ENCODE measurements at regions of chr9 and their contacts with region 1.

Region 1: DNA sequence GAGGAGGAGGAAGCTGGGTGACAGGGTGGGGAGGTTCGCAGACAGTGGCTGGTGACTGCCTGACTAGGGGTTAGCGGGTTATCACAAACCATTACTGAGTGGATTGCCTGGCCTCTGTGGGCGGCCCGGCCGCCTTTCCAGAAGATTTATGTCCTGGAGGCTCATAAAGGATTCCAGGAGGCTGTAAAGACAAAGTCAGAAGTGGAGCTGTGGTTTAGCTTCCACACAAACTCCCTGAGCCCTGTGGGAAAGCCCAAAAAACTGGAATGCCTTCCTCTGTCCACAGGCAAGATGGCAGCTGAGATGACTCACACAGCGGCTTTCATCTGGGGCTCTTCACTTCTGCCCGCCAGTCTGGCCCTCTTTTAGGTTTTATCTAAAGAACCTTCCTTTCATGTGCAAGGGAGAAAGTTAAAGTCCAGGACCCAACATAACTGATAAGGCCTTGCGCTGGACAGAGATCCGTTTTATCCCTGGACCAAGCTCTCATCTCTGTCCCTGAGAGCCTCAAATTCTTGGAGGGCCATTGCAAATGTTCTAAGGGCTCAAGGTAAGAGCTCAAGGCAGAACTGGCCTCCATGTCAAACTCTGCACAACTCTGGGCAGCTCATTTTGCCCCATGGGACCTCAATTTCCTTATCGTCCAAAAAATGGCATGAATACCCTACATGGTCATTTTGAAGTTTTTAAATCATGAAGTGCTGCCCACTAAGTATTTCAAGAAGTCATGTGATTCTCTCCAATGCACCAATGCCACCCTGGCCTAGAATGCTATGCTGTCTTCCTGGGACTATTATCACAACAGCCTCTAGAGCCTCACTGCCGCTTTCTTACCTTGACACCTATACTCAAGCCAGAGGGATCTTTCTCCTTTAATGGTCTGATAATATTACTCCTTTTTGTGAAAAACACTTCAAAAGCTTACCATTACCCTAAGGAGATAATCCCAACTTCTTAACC is 249.4 kb upstream of the TRIM32 start:
- DNase-seq: peak; percentile 47 to 84 (median 65)
- ATAC-seq: peak; percentile 93
- H3K4me3 ChIP-seq: no peak overlapping the region
- H3K27ac ChIP-seq: peak overlapping the region; percentile 80
- H3K4me1 ChIP-seq: peaks cover 8 to 19% of the 10 kb centered on the region in 2 experiments; a peak in 4 of 5 replicates
- H3K27me3 ChIP-seq: no peaks in the 10 kb centered on the region
- CTCF ChIP-seq: no peak
- EP300 ChIP-seq: peak; percentile 76
- POLR2A ChIP-seq: no peak
- RAD21 ChIP-seq: peak; percentile 7 to 16; a peak in 2 of 4 replicates

Region 2: GRCh38 chr9:116355153-116355921 is 82.4 kb before region 1 on chr9:
- CTCF ChIA-PET with region 1: no interaction called
- POLR2A ChIA-PET with region 1: interaction called, 3 read pairs
- in situ Hi-C with region 1: no loop called
- intact Hi-C with region 1: loop called (anchors 5 kb)
- DNase-seq: peak in 1 of 4 experiments; percentile 18
- ATAC-seq: peak; percentile 61
- H3K4me3 ChIP-seq: no peak overlapping the region
- H3K27ac ChIP-seq: no peak overlapping the region
- H3K4me1 ChIP-seq: peaks cover 6 to 20% of the 10 kb centered on the region in 2 experiments; a peak in 4 of 5 replicates
- H3K27me3 ChIP-seq: no peaks in the 10 kb centered on the region
- CTCF ChIP-seq: no peak
- EP300 ChIP-seq: no peak
- POLR2A ChIP-seq: no peak
- RAD21 ChIP-seq: no peak

Region 3: GRCh38 chr9:116390306-116391228 is 47.1 kb before region 1 on chr9:
- CTCF ChIA-PET with region 1: no interaction called
- POLR2A ChIA-PET with region 1: no interaction called
- in situ Hi-C with region 1: no loop called
- intact Hi-C with region 1: loop called (anchors 5 kb)
- DNase-seq: no peak
- ATAC-seq: no peak
- H3K4me3 ChIP-seq: no peak overlapping the region
- H3K27ac ChIP-seq: no peak overlapping the region
- H3K4me1 ChIP-seq: peaks cover 5 to 30% of the 10 kb centered on the region in 2 experiments; a peak in 4 of 5 replicates
- H3K27me3 ChIP-seq: no peaks in the 10 kb centered on the region
- CTCF ChIP-seq: no peak
- EP300 ChIP-seq: no peak
- POLR2A ChIP-seq: no peak
- RAD21 ChIP-seq: no peak

Region 4: DNA sequence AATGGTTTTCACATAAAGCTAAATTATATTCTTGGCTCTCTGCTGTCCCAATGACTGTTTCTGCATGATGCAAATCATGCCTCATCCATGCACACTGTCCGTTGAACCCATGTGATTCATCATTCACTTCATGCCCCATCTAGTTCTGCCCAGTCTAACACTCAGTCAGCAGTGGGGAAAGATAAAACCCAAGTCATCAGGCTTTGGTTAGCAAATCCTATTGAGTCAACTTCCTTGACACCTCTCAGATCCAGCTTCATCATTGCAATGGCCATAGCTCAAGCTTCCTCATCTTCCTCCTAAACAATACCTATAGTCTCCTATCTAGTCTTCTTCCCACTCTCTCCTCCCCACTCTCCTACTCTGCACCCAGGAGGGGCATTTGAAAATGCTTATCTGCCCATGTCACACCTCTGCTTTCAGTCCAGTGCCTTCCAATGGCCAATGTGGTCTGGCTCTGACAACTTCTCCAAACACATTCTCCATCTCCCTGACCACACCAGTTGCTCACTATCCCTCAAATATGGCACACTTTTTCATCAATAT is 16.6 kb before region 1 on chr9:
- CTCF ChIA-PET with region 1: interaction called, 4 read pairs
- POLR2A ChIA-PET with region 1: interaction called, 19 read pairs
- in situ Hi-C with region 1: no loop called
- intact Hi-C with region 1: loop called (anchors 2 kb)
- DNase-seq: peak in 2 of 4 experiments; percentile 40 to 67
- ATAC-seq: peak; percentile 11
- H3K4me3 ChIP-seq: no peak overlapping the region
- H3K27ac ChIP-seq: peak overlapping the region; percentile 16; the same call in 1 of the 3 replicates
- H3K4me1 ChIP-seq: peaks cover 13 to 63% of the 10 kb centered on the region in 2 experiments
- H3K27me3 ChIP-seq: no peaks in the 10 kb centered on the region
- CTCF ChIP-seq: no peak
- EP300 ChIP-seq: no peak
- POLR2A ChIP-seq: no peak
- RAD21 ChIP-seq: no peak

Region 5: GRCh38 chr9:116464987-116465571 is 27.4 kb after region 1 on chr9:
- CTCF ChIA-PET with region 1: no interaction called
- POLR2A ChIA-PET with region 1: interaction called, 3 read pairs
- in situ Hi-C with region 1: no loop called
- intact Hi-C with region 1: loop called (anchors 1 kb)
- DNase-seq: peak; percentile 65 to 97 (median 80)
- ATAC-seq: peak; percentile 79
- H3K4me3 ChIP-seq: no peak overlapping the region
- H3K27ac ChIP-seq: peak overlapping the region; percentile 95
- H3K4me1 ChIP-seq: peaks cover 23 to 79% of the 10 kb centered on the region in 2 experiments
- H3K27me3 ChIP-seq: no peaks in the 10 kb centered on the region
- CTCF ChIP-seq: no peak
- EP300 ChIP-seq: peak; percentile 100
- POLR2A ChIP-seq: no peak
- RAD21 ChIP-seq: peak; percentile 37 to 46

Region 6: DNA sequence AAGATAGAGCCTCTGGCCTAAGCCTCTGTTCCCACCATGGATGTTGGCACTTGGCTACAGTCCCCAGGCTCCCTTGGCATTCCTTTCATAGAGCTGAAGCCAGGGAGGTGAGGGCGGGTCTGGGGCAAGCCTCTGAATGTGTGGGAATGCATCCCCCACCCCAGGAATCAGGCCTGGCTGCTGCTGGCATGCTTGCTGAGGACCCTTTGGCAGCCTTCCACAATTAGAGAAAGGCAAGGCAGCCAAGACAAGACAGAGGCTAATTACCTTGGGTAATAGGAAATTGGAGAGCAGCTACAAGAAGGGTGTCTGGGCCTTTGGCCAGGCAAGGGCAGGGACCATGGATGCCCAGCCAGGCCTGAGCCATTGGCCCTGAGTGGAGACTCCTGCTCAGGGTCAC is 45.0 kb after region 1 on chr9:
- CTCF ChIA-PET with region 1: no interaction called
- POLR2A ChIA-PET with region 1: no interaction called
- in situ Hi-C with region 1: no loop called
- intact Hi-C with region 1: no loop called
- DNase-seq: no peak
- ATAC-seq: no peak
- H3K4me3 ChIP-seq: no peak overlapping the region
- H3K27ac ChIP-seq: no peak overlapping the region
- H3K4me1 ChIP-seq: peaks cover 12 to 19% of the 10 kb centered on the region in 2 experiments; a peak in 4 of 5 replicates
- H3K27me3 ChIP-seq: no peaks in the 10 kb centered on the region
- CTCF ChIP-seq: no peak
- EP300 ChIP-seq: no peak
- POLR2A ChIP-seq: no peak
- RAD21 ChIP-seq: no peak

Measured in K562 (cell line).